Esophagus muscularis mucosa (tissue), 4 donors: ENCODE measurements at regions of chr1 and their contacts with region 1.

Region 1: GRCh38 chr1:66764994-66765578 is 12.8 kb downstream of the DYNLT5 start:
- DNase-seq: no peak
- H3K4me3 ChIP-seq: no peak overlapping the region
- H3K27ac ChIP-seq: no peak overlapping the region
- H3K4me1 ChIP-seq: peaks cover 0 to 3% (median 0%) of the 10 kb centered on the region in 4 donors
- H3K27me3 ChIP-seq: no peaks in the 10 kb centered on the region
- CTCF ChIP-seq: peak; percentile 69 to 77 (median 72)
- EP300 ChIP-seq: no peak
- POLR2A ChIP-seq: no peak

Region 2: GRCh38 chr1:66552829-66553228 is 212.3 kb before region 1 on chr1:
- intact Hi-C with region 1: no loop called
- DNase-seq: no peak
- H3K4me3 ChIP-seq: no peak overlapping the region
- H3K27ac ChIP-seq: peak overlapping the region in 2 of 4 donors; percentile 11 to 12
- H3K4me1 ChIP-seq: peaks cover 8 to 42% (median 23%) of the 10 kb centered on the region in 4 donors
- H3K27me3 ChIP-seq: no peaks in the 10 kb centered on the region
- CTCF ChIP-seq: no peak
- EP300 ChIP-seq: no peak
- POLR2A ChIP-seq: no peak

Region 3: DNA sequence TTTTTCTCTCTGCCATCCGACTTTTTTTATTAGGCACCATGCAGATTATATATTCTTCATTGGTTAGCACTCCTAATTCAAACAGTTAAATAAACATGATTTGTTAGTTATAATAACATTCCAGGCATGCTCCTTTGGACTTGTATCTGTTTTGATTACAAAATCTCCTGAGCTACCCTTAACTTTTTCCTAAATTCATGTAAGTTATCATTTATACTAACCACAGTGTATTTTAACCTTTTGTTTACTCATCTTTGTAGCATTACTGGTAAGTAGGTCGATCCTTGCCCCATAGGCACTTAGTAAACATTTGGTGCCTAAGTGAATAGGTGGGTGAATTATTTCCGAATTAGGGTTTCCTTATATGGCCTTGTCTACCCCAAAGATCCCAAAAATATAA is 203.5 kb after region 1 on chr1:
- intact Hi-C with region 1: no loop called
- DNase-seq: no peak
- H3K4me3 ChIP-seq: no peak overlapping the region
- H3K27ac ChIP-seq: no peak overlapping the region
- H3K4me1 ChIP-seq: peaks cover 0 to 11% (median 5%) of the 10 kb centered on the region in 4 donors
- H3K27me3 ChIP-seq: no peaks in the 10 kb centered on the region
- CTCF ChIP-seq: no peak
- EP300 ChIP-seq: no peak
- POLR2A ChIP-seq: no peak

Region 4: DNA sequence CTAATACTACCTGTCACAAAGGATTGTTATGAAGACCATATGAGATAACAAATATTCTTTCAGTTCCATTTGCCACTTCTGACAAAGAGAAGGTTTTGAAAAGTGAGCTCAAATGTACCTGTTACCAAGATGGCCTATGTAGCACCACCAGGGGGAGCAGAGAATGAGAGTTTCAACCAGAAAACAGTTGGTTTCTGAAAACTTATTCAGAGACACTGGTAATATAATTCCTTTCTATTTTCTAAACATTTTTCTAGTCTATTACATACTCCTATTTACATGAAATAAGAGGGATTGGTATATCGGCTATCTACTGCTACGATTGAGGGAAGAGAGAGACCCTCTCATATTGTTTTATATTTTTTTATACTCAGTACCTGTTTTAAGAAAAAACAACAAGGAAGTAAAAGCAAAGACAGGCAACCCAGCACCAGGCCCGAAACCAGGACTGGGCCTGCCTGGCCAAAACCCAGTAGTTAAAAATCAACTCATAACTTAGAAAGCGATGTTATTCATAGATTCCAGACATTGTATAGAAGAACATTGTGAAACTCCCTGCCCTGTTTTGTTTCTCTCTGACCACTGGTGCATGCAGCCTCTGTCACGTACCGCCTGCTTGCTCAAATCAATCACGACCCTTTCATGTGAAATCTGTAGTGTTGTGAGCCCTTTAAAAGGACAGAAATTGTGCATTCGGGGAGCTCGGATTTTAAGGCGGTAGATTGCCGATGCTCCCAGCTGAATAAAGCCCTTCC is 449.5 kb after region 1 on chr1:
- intact Hi-C with region 1: loop called (anchors 10 kb)
- DNase-seq: no peak
- H3K4me3 ChIP-seq: no peak overlapping the region
- H3K27ac ChIP-seq: no peak overlapping the region
- H3K4me1 ChIP-seq: no peaks in the 10 kb centered on the region
- H3K27me3 ChIP-seq: no peaks in the 10 kb centered on the region
- CTCF ChIP-seq: peak in 1 of 3 experiments; percentile 44
- EP300 ChIP-seq: no peak
- POLR2A ChIP-seq: no peak